Motor neuron (in vitro differentiated cells): ENCODE measurements at regions of chr6 and their contacts with region 1.

Region 1: GRCh38 chr6:99882128-99882702 is 111.8 kb downstream of the MCHR2 start:
- ATAC-seq: peak in 3 of 8 experiments; percentile 15 to 73 (median 39)
- H3K4me3 ChIP-seq: no peak overlapping the region
- H3K27ac ChIP-seq: no peak overlapping the region
- H3K4me1 ChIP-seq: peaks cover 0 to 9% of the 10 kb centered on the region in 2 donors

Region 2: GRCh38 chr6:99575544-99576227 is 306.5 kb before region 1 on chr6:
- in situ Hi-C with region 1: no loop called
- ATAC-seq: no peak
- H3K4me3 ChIP-seq: no peak overlapping the region
- H3K27ac ChIP-seq: no peak overlapping the region
- H3K4me1 ChIP-seq: no peaks in the 10 kb centered on the region

Region 3: GRCh38 chr6:100099189-100100074 is 217.2 kb after region 1 on chr6:
- in situ Hi-C with region 1: loop called in 1 of 9 experiments (anchors 25 kb)
- ATAC-seq: peak in 4 of 8 experiments; percentile 30 to 65 (median 51)
- H3K4me3 ChIP-seq: no peak overlapping the region
- H3K27ac ChIP-seq: no peak overlapping the region
- H3K4me1 ChIP-seq: no peaks in the 10 kb centered on the region

Region 4: GRCh38 chr6:100126790-100127484 is 244.7 kb after region 1 on chr6:
- in situ Hi-C with region 1: no loop called
- ATAC-seq: peak in 5 of 8 experiments; percentile 14 to 63 (median 27)
- H3K4me3 ChIP-seq: no peak overlapping the region
- H3K27ac ChIP-seq: no peak overlapping the region
- H3K4me1 ChIP-seq: no peaks in the 10 kb centered on the region